Naive thymus-derived CD4-positive, alpha-beta T cell (primary cell): ENCODE measurements at regions of chr19 and their contacts with region 1.

Region 1: GRCh38 chr19:49443366-49444099 is 2.2 kb upstream of the SLC17A7 start:
- DNase-seq: peak; percentile 90 to 98 (median 95)
- ATAC-seq: peak; percentile 96
- H3K4me3 ChIP-seq: peak overlapping the region; percentile 57
- H3K4me3 Mint-ChIP-seq: peak overlapping the region; percentile 75 to 88 (median 83)
- H3K27ac ChIP-seq: peak overlapping the region; percentile 51
- H3K27ac Mint-ChIP-seq: peak overlapping the region; percentile 59 to 91 (median 83)
- H3K4me1 ChIP-seq: peaks cover 12 to 15% of the 10 kb centered on the region in 2 donors
- H3K4me1 Mint-ChIP-seq: peaks cover 29 to 54% (median 37%) of the 10 kb centered on the region in 7 donors
- H3K27me3 ChIP-seq: peaks cover 23 to 32% of the 10 kb centered on the region in 2 donors
- H3K27me3 Mint-ChIP-seq: peaks cover 36 to 48% (median 39%) of the 10 kb centered on the region in 5 donors

Region 2: GRCh38 chr19:48492925-48493717 is 950.4 kb before region 1 on chr19:
- CTCF ChIA-PET with region 1: no interaction called
- POLR2A ChIA-PET with region 1: no interaction called
- intact Hi-C with region 1: no loop called
- DNase-seq: peak; percentile 69 to 87 (median 78)
- ATAC-seq: peak; percentile 87
- H3K4me3 ChIP-seq: peak overlapping the region; percentile 41
- H3K4me3 Mint-ChIP-seq: peak overlapping the region; percentile 58 to 84 (median 72)
- H3K27ac ChIP-seq: no peak overlapping the region
- H3K27ac Mint-ChIP-seq: peak overlapping the region; percentile 20 to 86 (median 67)
- H3K4me1 ChIP-seq: peaks cover 4 to 25% of the 10 kb centered on the region in 2 donors
- H3K4me1 Mint-ChIP-seq: peaks cover 17 to 51% (median 43%) of the 10 kb centered on the region in 7 donors
- H3K27me3 ChIP-seq: no peaks in the 10 kb centered on the region
- H3K27me3 Mint-ChIP-seq: peaks cover 0 to 57% (median 6%) of the 10 kb centered on the region in 5 donors

Region 3: GRCh38 chr19:49148784-49149651 is 294.5 kb before region 1 on chr19:
- CTCF ChIA-PET with region 1: no interaction called
- POLR2A ChIA-PET with region 1: no interaction called
- intact Hi-C with region 1: loop called in 1 of 2 experiments (anchors 10 kb)
- DNase-seq: peak; percentile 39 to 83 (median 59)
- ATAC-seq: peak; percentile 75
- H3K4me3 ChIP-seq: peak overlapping the region; percentile 52
- H3K4me3 Mint-ChIP-seq: peak overlapping the region; percentile 32 to 88 (median 76)
- H3K27ac ChIP-seq: no peak overlapping the region
- H3K27ac Mint-ChIP-seq: no peak overlapping the region
- H3K4me1 ChIP-seq: peaks cover 8 to 35% of the 10 kb centered on the region in 2 donors
- H3K4me1 Mint-ChIP-seq: peaks cover 16 to 43% (median 35%) of the 10 kb centered on the region in 7 donors
- H3K27me3 ChIP-seq: peaks cover 8 to 29% of the 10 kb centered on the region in 2 donors
- H3K27me3 Mint-ChIP-seq: peaks cover 59 to 71% (median 61%) of the 10 kb centered on the region in 5 donors

Region 4: GRCh38 chr19:49301165-49301865 is 142.2 kb before region 1 on chr19:
- CTCF ChIA-PET with region 1: interaction called, 3 read pairs
- POLR2A ChIA-PET with region 1: no interaction called
- intact Hi-C with region 1: loop called in 1 of 2 experiments (anchors 2 kb)
- DNase-seq: peak; percentile 45 to 82 (median 66)
- ATAC-seq: peak; percentile 99
- H3K4me3 ChIP-seq: no peak overlapping the region
- H3K4me3 Mint-ChIP-seq: peak overlapping the region in 2 of 10 donors; percentile 15 to 25
- H3K27ac ChIP-seq: no peak overlapping the region
- H3K27ac Mint-ChIP-seq: peak overlapping the region in 1 of 9 donors; percentile 36
- H3K4me1 ChIP-seq: no peaks in the 10 kb centered on the region
- H3K4me1 Mint-ChIP-seq: peaks cover 0 to 8% (median 4%) of the 10 kb centered on the region in 7 donors
- H3K27me3 ChIP-seq: no peaks in the 10 kb centered on the region
- H3K27me3 Mint-ChIP-seq: peaks cover 0 to 17% (median 0%) of the 10 kb centered on the region in 5 donors

Region 5: GRCh38 chr19:49391581-49392399 is 51.7 kb before region 1 on chr19:
- CTCF ChIA-PET with region 1: interaction called, 28 read pairs
- POLR2A ChIA-PET with region 1: interaction called, 3 read pairs
- intact Hi-C with region 1: loop called (anchors 1 kb)
- DNase-seq: peak; percentile 61 to 82 (median 74)
- ATAC-seq: peak; percentile 89
- H3K4me3 ChIP-seq: no peak overlapping the region
- H3K4me3 Mint-ChIP-seq: peak overlapping the region in 2 of 10 donors; percentile 3 to 51
- H3K27ac ChIP-seq: no peak overlapping the region
- H3K27ac Mint-ChIP-seq: peak overlapping the region in 6 of 9 donors; percentile 1 to 84 (median 54)
- H3K4me1 ChIP-seq: peaks cover 7 to 13% of the 10 kb centered on the region in 2 donors
- H3K4me1 Mint-ChIP-seq: peaks cover 6 to 26% (median 10%) of the 10 kb centered on the region in 7 donors
- H3K27me3 ChIP-seq: no peaks in the 10 kb centered on the region
- H3K27me3 Mint-ChIP-seq: peaks cover 0 to 11% (median 3%) of the 10 kb centered on the region in 5 donors

Region 6: GRCh38 chr19:49430678-49431329 is 12.7 kb before region 1 on chr19:
- CTCF ChIA-PET with region 1: no interaction called
- POLR2A ChIA-PET with region 1: no interaction called
- intact Hi-C with region 1: loop called in 1 of 2 experiments (anchors 1 kb)
- DNase-seq: no peak
- ATAC-seq: peak; percentile 54
- H3K4me3 ChIP-seq: no peak overlapping the region
- H3K4me3 Mint-ChIP-seq: peak overlapping the region in 3 of 10 donors; percentile 23 to 32 (median 25)
- H3K27ac ChIP-seq: no peak overlapping the region
- H3K27ac Mint-ChIP-seq: peak overlapping the region in 1 of 9 donors; percentile 11
- H3K4me1 ChIP-seq: peaks cover 7 to 27% of the 10 kb centered on the region in 2 donors
- H3K4me1 Mint-ChIP-seq: peaks cover 33 to 53% (median 39%) of the 10 kb centered on the region in 7 donors
- H3K27me3 ChIP-seq: peaks cover 15 to 53% of the 10 kb centered on the region in 2 donors
- H3K27me3 Mint-ChIP-seq: peaks cover 79 to 96% (median 85%) of the 10 kb centered on the region in 5 donors

Region 7: GRCh38 chr19:49497047-49497788 is 53.7 kb after region 1 on chr19:
- CTCF ChIA-PET with region 1: no interaction called
- POLR2A ChIA-PET with region 1: no interaction called
- intact Hi-C with region 1: loop called in 1 of 2 experiments (anchors 2 kb)
- DNase-seq: peak; percentile 55 to 85 (median 77)
- ATAC-seq: peak; percentile 20
- H3K4me3 ChIP-seq: peak overlapping the region; percentile 97
- H3K4me3 Mint-ChIP-seq: peak overlapping the region; percentile 96 to 100 (median 99)
- H3K27ac ChIP-seq: peak overlapping the region; percentile 99
- H3K27ac Mint-ChIP-seq: peak overlapping the region; percentile 91 to 100 (median 98)
- H3K4me1 ChIP-seq: peaks cover 21 to 40% of the 10 kb centered on the region in 2 donors
- H3K4me1 Mint-ChIP-seq: peaks cover 32 to 64% (median 50%) of the 10 kb centered on the region in 7 donors
- H3K27me3 ChIP-seq: no peaks in the 10 kb centered on the region
- H3K27me3 Mint-ChIP-seq: peaks cover 0 to 12% (median 0%) of the 10 kb centered on the region in 5 donors